Natural killer cell (primary cell): ENCODE measurements at regions of chr16 and their contacts with region 1.

Region 1: DNA sequence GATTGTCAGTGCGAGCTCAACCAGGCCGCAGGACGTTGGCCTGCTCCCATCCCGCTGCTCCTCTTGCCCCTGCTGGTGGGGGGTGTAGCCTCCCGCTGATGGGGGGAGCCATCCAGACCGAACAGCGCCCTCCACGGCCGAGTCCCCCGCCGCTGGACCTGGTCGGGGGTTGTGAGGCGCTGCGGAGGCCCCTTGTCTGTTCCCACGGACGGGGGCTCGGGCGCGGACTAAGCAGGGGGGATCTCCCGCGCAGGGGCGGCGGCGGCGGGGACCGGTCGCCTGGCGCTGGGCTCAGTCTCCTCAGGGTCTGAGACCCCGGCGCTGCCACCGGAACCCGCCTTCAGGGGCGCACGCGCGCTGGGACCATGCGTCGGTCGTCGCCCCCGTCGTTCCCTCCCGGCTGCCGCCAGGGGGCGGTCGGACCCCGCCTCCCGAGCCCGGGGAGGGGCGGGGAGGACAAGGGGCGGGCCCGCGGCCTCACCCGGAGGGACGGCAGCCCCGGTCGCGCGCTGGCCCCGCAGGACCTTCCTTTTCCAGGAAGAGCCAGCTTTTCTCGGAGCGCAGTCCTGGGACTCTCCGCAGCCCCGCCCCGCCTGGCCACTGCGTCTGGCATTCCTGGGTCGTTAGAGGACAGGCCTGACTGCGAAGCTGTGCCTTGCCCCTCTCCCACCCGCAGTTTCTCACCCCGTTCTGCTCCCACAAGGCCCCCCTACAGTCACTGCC is 6.3 kb upstream of the IL32 start:
- DNase-seq: peak; percentile 90 to 95
- ATAC-seq: peak; percentile 92 to 97 (median 94)
- H3K4me3 ChIP-seq: peak overlapping the region; percentile 93
- H3K4me3 Mint-ChIP-seq: peak overlapping the region; percentile 93
- H3K27ac ChIP-seq: peak overlapping the region; percentile 81
- H3K27ac Mint-ChIP-seq: peak overlapping the region; percentile 84 to 90
- H3K4me1 ChIP-seq: peaks cover 56% of the 10 kb centered on the region
- H3K4me1 Mint-ChIP-seq: peaks cover 22 to 57% of the 10 kb centered on the region in 2 donors
- H3K27me3 ChIP-seq: no peaks in the 10 kb centered on the region
- H3K27me3 Mint-ChIP-seq: no peaks in the 10 kb centered on the region
- CTCF ChIP-seq: peak; percentile 92

Region 2: DNA sequence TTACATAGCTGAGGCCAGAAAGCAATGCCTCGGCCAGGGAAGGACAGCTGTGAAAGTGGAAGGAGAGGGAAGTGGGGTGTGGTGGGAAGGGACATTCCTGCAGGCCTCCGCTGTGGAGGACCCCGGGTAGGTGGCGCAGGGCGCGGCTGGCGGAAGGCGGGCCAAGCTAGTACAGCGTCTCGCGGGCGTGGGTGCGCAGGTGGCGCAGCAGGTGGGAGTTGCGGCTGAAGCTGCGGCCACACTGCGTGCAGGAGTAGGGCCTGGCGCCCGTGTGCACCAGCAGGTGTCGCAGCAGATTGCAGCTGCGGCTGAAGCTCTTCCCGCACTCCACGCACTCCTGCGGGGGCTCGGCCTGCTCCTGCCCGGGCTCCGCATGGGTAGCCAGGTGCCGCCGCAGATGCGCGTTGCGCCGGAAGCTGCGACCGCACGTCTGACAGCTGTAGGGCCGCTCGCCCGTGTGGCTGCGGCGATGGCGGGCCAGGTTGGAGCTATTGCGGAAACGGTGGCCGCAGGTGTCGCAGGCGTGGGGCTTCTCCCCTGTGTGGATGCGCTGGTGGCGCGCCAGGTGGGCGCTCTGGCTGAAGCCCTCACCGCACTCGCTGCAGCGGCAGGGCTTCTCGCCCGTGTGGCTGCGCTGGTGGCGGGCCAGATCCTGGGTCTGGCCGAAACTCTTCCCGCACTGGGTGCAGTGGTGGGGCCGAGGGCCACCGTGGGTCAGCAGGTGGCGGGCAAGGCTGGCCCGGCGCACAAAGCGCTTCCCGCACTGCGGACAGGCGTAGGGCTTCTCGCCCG is 30.0 kb after region 1 on chr16:
- intact Hi-C with region 1: no loop called
- DNase-seq: no peak
- ATAC-seq: no peak
- H3K4me3 ChIP-seq: no peak overlapping the region
- H3K4me3 Mint-ChIP-seq: no peak overlapping the region
- H3K27ac ChIP-seq: no peak overlapping the region
- H3K27ac Mint-ChIP-seq: no peak overlapping the region
- H3K4me1 ChIP-seq: peaks cover 40% of the 10 kb centered on the region
- H3K4me1 Mint-ChIP-seq: peaks cover 37 to 42% of the 10 kb centered on the region in 2 donors
- H3K27me3 ChIP-seq: no peaks in the 10 kb centered on the region
- H3K27me3 Mint-ChIP-seq: no peaks in the 10 kb centered on the region
- CTCF ChIP-seq: no peak

Region 3: DNA sequence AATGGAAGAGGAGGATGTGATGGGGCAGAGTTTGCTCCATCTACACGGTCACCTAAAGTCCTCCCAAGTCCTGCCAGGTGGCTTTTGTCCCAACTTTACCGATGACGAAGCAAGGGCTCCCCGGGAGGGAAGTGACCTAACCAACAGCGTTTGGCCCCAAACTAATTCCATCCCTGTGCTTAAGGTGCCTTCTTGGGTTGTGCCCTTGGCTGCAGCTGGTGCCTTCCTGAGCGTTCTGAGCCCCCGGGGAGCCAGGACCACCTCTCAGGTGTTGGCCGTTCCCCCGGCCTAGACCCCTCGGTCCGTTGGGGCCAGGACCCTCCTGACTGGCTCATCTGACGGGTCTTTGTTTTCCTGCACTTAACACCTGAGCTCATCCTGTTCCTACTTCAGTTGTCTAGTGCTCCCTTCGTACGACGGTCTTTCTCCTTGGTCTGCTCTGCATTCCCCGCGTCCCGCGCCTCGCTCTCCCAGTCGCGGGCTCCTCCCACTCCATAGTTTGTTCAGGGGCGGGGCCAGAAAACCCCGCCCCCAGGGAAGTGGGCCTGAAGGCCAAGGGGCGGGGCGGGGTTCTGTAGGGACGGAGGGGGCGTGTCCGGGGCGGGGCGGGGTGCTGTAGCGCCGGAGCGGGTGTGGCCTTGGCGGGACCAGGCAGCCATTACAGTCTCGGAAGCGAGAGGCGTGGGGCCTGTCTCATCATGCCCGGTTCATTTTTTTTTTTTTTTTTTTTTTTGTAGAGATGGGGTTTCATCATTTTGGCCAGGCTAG is 40.8 kb after region 1 on chr16:
- intact Hi-C with region 1: loop called (anchors 5 kb)
- DNase-seq: peak; percentile 71 to 94
- ATAC-seq: peak; percentile 81 to 92 (median 85)
- H3K4me3 ChIP-seq: peak overlapping the region; percentile 21
- H3K4me3 Mint-ChIP-seq: peak overlapping the region; percentile 82
- H3K27ac ChIP-seq: no peak overlapping the region
- H3K27ac Mint-ChIP-seq: peak overlapping the region; percentile 72 to 89
- H3K4me1 ChIP-seq: peaks cover 47% of the 10 kb centered on the region
- H3K4me1 Mint-ChIP-seq: peaks cover 21 to 41% of the 10 kb centered on the region in 2 donors
- H3K27me3 ChIP-seq: no peaks in the 10 kb centered on the region
- H3K27me3 Mint-ChIP-seq: no peaks in the 10 kb centered on the region
- CTCF ChIP-seq: no peak

Region 4: DNA sequence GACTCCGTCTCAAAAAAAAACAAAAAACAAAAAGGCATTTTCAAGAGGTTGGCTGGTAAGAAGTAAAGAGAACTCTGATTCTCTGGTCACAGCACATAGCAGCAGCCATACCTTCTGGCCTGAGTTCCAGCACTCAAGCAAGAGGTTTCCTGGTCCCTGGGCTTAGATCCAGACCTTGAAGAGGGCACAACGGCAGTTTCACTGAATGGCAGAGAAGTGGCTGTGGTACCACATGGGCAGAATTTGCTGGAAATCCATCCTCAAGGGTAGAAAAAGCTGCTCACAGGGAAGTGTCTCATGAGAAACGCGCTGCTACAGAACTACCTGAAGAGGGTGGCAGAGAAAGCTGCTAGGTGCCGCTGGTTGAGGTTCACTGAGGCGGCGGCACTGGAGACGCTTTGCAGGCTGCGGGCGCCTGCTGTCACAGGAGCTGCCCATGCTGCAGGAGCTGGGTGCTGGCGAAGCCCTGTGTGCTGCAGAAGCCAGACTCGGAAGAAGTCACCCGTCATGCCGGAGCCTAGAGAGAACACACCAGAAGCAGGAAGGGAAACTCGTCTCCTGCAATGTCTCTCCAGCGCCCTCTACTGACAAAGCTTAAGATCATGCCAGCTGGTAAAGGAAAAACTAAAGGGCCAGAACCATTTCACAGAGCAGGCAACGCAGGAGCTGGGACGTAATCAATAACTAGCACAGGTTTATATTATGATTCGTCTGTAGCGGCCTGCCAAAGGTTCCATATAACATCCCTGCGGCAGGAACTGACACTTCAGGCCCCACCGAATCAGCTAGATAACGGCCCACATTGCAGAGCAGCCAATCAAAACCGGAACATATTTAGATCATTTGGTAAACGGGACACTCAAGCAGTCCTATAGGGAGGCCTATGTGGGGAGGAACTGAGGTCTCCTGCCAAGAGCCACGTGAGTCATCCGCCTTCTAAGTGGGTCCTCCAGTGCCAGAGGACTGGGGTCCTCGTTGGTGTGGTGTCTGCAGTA is 70.3 kb after region 1 on chr16:
- intact Hi-C with region 1: loop called (anchors 1 kb)
- DNase-seq: peak; percentile 59 to 95
- ATAC-seq: peak; percentile 75 to 88 (median 76)
- H3K4me3 ChIP-seq: peak overlapping the region; percentile 54
- H3K4me3 Mint-ChIP-seq: peak overlapping the region; percentile 96
- H3K27ac ChIP-seq: peak overlapping the region; percentile 44
- H3K27ac Mint-ChIP-seq: peak overlapping the region; percentile 85 to 91
- H3K4me1 ChIP-seq: peaks cover 44% of the 10 kb centered on the region
- H3K4me1 Mint-ChIP-seq: peaks cover 38 to 61% of the 10 kb centered on the region in 2 donors
- H3K27me3 ChIP-seq: no peaks in the 10 kb centered on the region
- H3K27me3 Mint-ChIP-seq: no peaks in the 10 kb centered on the region
- CTCF ChIP-seq: peak; percentile 97

Region 5: DNA sequence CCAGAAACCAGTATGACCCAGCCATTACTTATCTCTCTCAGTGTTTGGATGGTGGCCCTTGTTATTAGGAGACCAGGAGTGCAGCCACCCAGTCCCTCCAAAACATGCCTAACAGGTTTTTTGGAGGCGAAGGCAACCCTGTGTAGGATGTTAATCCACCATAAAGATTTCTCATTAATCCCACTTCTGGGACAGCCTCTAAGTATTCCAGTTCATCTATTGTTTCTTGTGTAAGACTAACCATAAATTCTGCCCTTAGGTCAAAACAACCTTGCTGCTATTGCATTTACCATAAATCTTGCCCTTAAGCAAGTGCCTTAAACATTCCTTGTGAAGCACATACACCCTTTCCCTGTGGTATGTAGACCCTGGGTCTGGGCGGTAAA is 107.3 kb after region 1 on chr16:
- intact Hi-C with region 1: loop called (anchors 1 kb)
- DNase-seq: no peak
- ATAC-seq: no peak
- H3K4me3 ChIP-seq: no peak overlapping the region
- H3K4me3 Mint-ChIP-seq: no peak overlapping the region
- H3K27ac ChIP-seq: no peak overlapping the region
- H3K27ac Mint-ChIP-seq: no peak overlapping the region
- H3K4me1 ChIP-seq: peaks cover 22% of the 10 kb centered on the region
- H3K4me1 Mint-ChIP-seq: peaks cover 20 to 29% of the 10 kb centered on the region in 2 donors
- H3K27me3 ChIP-seq: peaks cover 17% of the 10 kb centered on the region
- H3K27me3 Mint-ChIP-seq: peaks cover 6 to 17% of the 10 kb centered on the region in 2 donors
- CTCF ChIP-seq: no peak